Body of pancreas (tissue), 4 donors: ENCODE measurements at regions of chr22 and their contacts with region 1.

Region 1: GRCh38 chr22:31148953-31149627 is 8.8 kb upstream of the PLA2G3 start:
- DNase-seq: peak; percentile 78 to 85 (median 84)
- ATAC-seq: peak; percentile 99
- H3K4me3 ChIP-seq: no peak overlapping the region
- H3K27ac ChIP-seq: peak overlapping the region in 2 of 4 donors; percentile 9 to 31
- H3K4me1 ChIP-seq: peaks cover 7% of the 10 kb centered on the region
- H3K27me3 ChIP-seq: no peaks in the 10 kb centered on the region
- CTCF ChIP-seq: peak; percentile 88 to 97 (median 95)
- POLR2A ChIP-seq: no peak

Region 2: GRCh38 chr22:30606455-30607299 is 542.4 kb before region 1 on chr22 and contains the start of gene TCN2:
- intact Hi-C with region 1: no loop called
- DNase-seq: peak; percentile 65 to 83 (median 80)
- ATAC-seq: peak; percentile 81
- H3K4me3 ChIP-seq: peak within 1 kb of the TSS; percentile 34 to 46
- H3K27ac ChIP-seq: peak within 1 kb of the TSS; percentile 75 to 86 (median 80)
- H3K4me1 ChIP-seq: peaks cover 25% of the 10 kb centered on the region
- H3K27me3 ChIP-seq: no peaks in the 10 kb centered on the region
- CTCF ChIP-seq: peak in 1 of 7 experiments; percentile 30
- POLR2A ChIP-seq: peak; percentile 24 to 62 (median 58)
- total RNA-seq, gene TCN2: 14.8 to 16.3 TPM

Region 3: DNA sequence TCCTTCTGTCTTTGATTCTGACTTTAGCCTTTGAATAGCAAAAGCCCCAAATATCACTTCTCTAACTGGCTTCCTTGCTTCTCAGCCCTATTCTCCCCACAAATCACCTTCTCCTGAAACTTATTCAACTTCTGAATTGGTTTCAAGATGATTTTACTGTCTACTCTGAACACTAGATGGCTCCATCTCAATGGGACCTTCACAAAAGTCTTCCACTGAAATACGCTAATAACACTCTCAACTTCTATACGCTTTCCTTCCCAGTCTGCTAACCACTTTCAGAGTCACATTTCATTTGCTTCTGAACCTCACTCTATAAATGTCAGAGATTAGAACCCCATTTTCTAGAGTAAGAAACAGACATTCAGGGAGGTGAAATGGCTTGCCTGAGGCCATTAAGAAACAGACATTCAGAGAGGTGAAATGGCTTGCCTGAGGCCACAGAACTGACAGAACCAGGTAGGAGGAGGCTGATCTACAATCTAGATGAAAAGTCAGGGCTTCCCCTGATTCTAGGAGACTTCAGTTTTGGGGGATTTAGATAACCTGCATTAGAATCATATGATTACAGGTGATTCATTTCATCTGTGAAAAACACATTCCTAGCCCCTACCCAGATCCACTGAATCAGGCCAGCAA is 201.2 kb before region 1 on chr22:
- intact Hi-C with region 1: loop called (anchors 10 kb)
- DNase-seq: no peak
- ATAC-seq: peak; percentile 66
- H3K4me3 ChIP-seq: no peak overlapping the region
- H3K27ac ChIP-seq: no peak overlapping the region
- H3K4me1 ChIP-seq: no peaks in the 10 kb centered on the region
- H3K27me3 ChIP-seq: no peaks in the 10 kb centered on the region
- CTCF ChIP-seq: peak; percentile 5 to 71 (median 62)
- POLR2A ChIP-seq: no peak

Region 4: DNA sequence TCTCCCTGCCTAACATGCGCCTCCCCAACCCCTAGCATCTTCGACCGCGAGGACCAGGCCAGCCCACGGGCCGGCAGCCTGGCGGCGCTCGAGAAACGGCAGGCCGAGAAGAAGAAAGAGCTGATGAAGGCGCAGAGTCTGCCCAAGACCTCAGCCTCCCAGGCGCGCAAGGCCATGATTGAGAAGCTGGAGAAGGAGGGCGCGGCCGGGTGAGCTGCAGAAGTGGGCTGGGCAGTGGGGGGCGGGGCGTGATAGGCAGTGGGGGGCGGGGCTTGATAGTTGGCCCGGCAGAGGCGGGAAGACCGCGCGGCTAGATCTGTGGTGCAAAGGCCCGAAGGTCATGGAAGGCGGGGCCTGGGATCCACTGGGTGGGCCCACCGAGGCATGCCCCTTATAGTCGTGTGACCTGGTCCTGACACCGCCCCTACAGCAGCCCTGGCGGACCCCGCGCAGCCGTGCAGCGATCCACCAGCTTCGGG is 50.4 kb before region 1 on chr22:
- intact Hi-C with region 1: loop called (anchors 5 kb)
- DNase-seq: no peak
- ATAC-seq: no peak
- H3K4me3 ChIP-seq: no peak overlapping the region
- H3K27ac ChIP-seq: no peak overlapping the region
- H3K4me1 ChIP-seq: peaks cover 6% of the 10 kb centered on the region
- H3K27me3 ChIP-seq: no peaks in the 10 kb centered on the region
- CTCF ChIP-seq: no peak
- POLR2A ChIP-seq: no peak